ENCODE measurements at regions of chr19 and their contacts with region 1.

Region 1: GRCh38 chr19:56403764-56404704 is at the start of gene ZNF583:
- DNase-seq: peak; percentile 84 to 96 (median 90)
- ATAC-seq: peak; percentile 88
- H3K4me3 Mint-ChIP-seq: peak within 1 kb of the TSS; percentile 81 to 95 (median 93)
- H3K27ac Mint-ChIP-seq: peak within 1 kb of the TSS; percentile 87 to 99 (median 98)
- H3K4me1 Mint-ChIP-seq: peaks cover 23 to 30% (median 25%) of the 10 kb centered on the region in 4 donors
- H3K27me3 Mint-ChIP-seq: no peaks in the 10 kb centered on the region
- polyA plus RNA-seq, gene ZNF583: 14.0 to 17.3 (median 14.5) TPM

Region 2: GRCh38 chr19:56367829-56368711 is 36.0 kb before region 1 on chr19:
- POLR2A ChIA-PET with region 1: interaction called, 10 read pairs
- DNase-seq: peak; percentile 59 to 94 (median 81)
- ATAC-seq: peak; percentile 96 to 98
- H3K4me3 Mint-ChIP-seq: peak overlapping the region; percentile 89 to 98 (median 94)
- H3K27ac Mint-ChIP-seq: peak overlapping the region; percentile 79 to 99 (median 94)
- H3K4me1 Mint-ChIP-seq: peaks cover 7 to 25% (median 23%) of the 10 kb centered on the region in 4 donors
- H3K27me3 Mint-ChIP-seq: no peaks in the 10 kb centered on the region

Region 3: DNA sequence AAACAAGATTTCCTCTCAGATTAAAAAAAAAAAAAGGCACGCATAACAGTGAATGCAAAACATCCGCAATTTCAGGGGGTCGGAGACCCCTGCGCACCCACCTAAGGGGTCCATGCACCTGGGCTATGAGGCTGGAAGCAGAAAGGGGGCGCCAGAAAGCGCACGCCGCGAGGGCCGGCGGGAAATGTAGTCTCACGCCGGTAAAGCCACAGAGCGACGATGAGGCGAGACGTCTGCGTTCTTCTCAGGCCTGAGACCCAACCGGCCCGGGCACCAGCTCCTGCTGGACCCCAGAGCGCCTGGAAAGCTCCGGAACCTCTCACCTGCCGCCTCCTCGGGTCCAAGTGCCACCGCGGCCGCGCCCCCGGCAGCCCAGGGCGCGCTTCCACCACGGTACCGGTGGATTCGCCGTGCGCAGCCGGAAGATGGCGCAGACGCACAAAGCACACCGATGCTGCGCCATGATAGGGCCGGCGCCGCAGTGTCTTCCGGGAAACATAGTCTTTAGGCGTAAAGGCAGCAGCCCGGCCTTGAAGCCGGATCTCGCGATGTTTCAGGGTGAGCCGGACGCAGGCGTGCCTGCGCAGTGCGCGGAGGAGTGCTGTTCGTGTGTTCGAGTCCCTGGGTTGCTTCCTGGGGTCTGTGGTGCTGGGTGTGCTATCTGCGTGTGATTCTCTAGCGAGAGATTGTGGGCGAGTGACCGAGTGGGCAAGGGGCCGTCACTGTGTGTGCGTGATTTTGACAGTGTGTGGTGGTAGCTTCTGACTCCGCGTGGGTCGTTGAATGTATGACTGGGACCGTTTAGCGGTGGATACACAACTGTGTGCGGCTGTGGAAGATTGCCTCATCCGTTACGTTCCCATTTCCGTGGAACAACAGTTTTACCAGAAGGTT is 10.7 kb before region 1 on chr19 and contains the start of gene ZNF582:
- POLR2A ChIA-PET with region 1: interaction called, 16 read pairs
- DNase-seq: peak; percentile 81 to 98 (median 90)
- ATAC-seq: peak; percentile 97
- H3K4me3 Mint-ChIP-seq: peak within 1 kb of the TSS; percentile 93 to 100 (median 99)
- H3K27ac Mint-ChIP-seq: peak within 1 kb of the TSS; percentile 92 to 99 (median 96)
- H3K4me1 Mint-ChIP-seq: peaks cover 6 to 20% (median 11%) of the 10 kb centered on the region in 4 donors
- H3K27me3 Mint-ChIP-seq: no peaks in the 10 kb centered on the region
- polyA plus RNA-seq, gene ZNF582: 5.6 to 6.8 (median 6.5) TPM